ENCODE measurements at regions of chr2 and their contacts with region 1.

Region 1: DNA sequence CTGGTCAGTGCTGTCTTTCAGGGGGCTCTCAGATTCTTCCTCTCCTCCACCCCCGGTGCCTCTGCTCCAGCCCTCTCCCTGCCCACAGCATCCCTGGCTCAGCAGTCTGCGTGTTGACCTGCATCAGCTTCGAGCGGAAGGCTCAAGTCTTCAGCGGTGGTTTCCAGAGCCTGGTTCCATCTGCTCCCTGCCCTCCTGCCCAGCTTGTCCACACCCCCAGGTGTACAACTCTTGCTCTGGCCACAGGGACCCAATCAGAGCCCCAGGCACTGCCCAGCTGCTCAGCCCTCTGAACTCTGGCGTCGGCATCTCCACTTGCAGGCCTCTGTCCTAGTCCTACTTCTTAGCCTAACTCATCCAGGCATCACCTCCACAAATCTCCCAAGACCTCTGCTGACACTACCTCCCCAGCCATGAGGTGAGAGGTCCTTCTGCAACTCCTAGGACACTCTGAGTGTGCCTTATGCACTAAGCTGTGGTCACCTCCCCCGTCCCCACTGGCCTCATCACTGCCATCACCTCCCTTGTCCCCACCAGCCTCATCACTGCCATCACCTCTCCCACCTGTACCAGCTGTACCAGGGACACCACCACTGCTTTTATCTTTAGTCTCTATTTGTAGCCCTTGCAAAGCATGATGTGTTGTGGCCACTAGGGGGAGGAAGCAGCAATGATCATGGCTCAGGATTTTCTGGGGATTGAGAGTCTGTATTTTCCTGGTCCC is 60.9 kb downstream of the EDAR start:
- DNase-seq: peak; percentile 33 to 71 (median 50)
- H3K4me3 ChIP-seq: no peak overlapping the region
- H3K27ac ChIP-seq: no peak overlapping the region
- H3K4me1 ChIP-seq: no peaks in the 10 kb centered on the region
- H3K27me3 ChIP-seq: no peaks in the 10 kb centered on the region
- CTCF ChIP-seq: peak; percentile 73 to 89 (median 78)
- POLR2A ChIP-seq: no peak

Region 2: GRCh38 chr2:108776475-108776874 is 151.6 kb before region 1 on chr2:
- intact Hi-C with region 1: no loop called
- DNase-seq: no peak
- H3K4me3 ChIP-seq: no peak overlapping the region
- H3K27ac ChIP-seq: no peak overlapping the region
- H3K4me1 ChIP-seq: no peaks in the 10 kb centered on the region
- H3K27me3 ChIP-seq: no peaks in the 10 kb centered on the region
- CTCF ChIP-seq: no peak
- POLR2A ChIP-seq: no peak

Region 3: DNA sequence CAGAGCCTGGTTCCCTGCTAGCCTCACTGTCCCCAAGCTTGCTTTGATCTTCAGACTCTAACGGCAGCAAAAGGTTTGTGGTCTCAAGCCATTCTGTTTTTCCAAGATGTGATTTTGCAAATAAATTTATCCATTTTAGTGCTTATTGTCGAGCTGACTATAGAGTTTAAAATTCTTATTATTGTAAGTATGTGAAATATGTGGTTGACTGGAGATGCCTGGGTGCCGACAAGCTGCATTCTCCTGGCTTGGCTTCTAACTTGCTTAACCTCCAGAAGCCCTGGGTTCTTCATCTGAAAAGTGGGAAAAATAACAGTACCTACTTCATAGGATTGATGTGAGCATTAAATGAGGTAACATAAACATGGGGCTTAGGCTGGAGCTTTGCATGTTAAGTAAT is 70.8 kb after region 1 on chr2:
- intact Hi-C with region 1: loop called in 1 of 2 experiments (anchors 10 kb)
- DNase-seq: no peak
- H3K4me3 ChIP-seq: no peak overlapping the region
- H3K27ac ChIP-seq: no peak overlapping the region
- H3K4me1 ChIP-seq: no peaks in the 10 kb centered on the region
- H3K27me3 ChIP-seq: no peaks in the 10 kb centered on the region
- CTCF ChIP-seq: no peak
- POLR2A ChIP-seq: no peak

Region 4: GRCh38 chr2:109009920-109010610 is 82.0 kb after region 1 on chr2:
- intact Hi-C with region 1: no loop called
- DNase-seq: no peak
- H3K4me3 ChIP-seq: no peak overlapping the region
- H3K27ac ChIP-seq: no peak overlapping the region
- H3K4me1 ChIP-seq: no peaks in the 10 kb centered on the region
- H3K27me3 ChIP-seq: no peaks in the 10 kb centered on the region
- CTCF ChIP-seq: no peak
- POLR2A ChIP-seq: no peak

Region 5: DNA sequence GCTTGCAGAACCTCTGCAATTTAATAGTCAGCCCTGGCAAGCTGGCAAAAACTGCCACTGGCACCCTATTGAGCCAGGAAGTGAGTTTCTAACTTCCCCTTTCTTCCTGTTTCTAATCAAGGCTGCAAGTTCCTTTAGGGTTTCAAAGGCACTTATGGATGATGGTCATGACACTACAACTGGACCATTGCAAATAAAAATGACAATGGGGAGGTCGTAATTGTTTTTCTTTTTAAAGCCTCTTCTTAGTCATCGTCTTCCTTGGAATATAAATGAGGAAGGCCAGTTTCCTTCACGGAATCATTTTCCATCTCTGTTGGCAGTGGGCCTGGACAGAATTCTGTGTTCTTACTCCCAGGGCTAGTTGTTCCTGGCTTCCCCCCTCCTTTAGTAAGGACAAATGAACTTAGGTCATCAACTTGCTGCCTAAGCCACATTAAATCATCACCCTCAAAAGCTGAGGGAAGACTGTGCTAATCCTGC is 236.7 kb after region 1 on chr2:
- intact Hi-C with region 1: no loop called
- DNase-seq: peak; percentile 61 to 84 (median 67)
- H3K4me3 ChIP-seq: no peak overlapping the region
- H3K27ac ChIP-seq: peak overlapping the region in 4 of 5 donors; percentile 29 to 68 (median 47)
- H3K4me1 ChIP-seq: peaks cover 29 to 42% of the 10 kb centered on the region in 2 donors
- H3K27me3 ChIP-seq: no peaks in the 10 kb centered on the region
- CTCF ChIP-seq: no peak
- POLR2A ChIP-seq: no peak

Region 6: GRCh38 chr2:109510136-109511028 is 582.3 kb after region 1 on chr2:
- intact Hi-C with region 1: loop called in 1 of 2 experiments (anchors 5 kb)
- DNase-seq: peak; percentile 75 to 94 (median 82)
- H3K4me3 ChIP-seq: no peak overlapping the region
- H3K27ac ChIP-seq: no peak overlapping the region
- H3K4me1 ChIP-seq: no peaks in the 10 kb centered on the region
- H3K27me3 ChIP-seq: no peaks in the 10 kb centered on the region
- CTCF ChIP-seq: peak; percentile 90 to 95 (median 93)
- POLR2A ChIP-seq: no peak

Measured in adrenal gland (tissue), 19 donors.